IMR-90 (cell line): ENCODE measurements at regions of chr3 and their contacts with region 1.

Region 1: GRCh38 chr3:58299839-58300516 is 6.1 kb upstream of the RPP14 start:
- DNase-seq: peak; percentile 73
- ATAC-seq: peak; percentile 72
- H3K4me3 ChIP-seq: no peak overlapping the region
- H3K27ac ChIP-seq: no peak overlapping the region
- H3K4me1 ChIP-seq: no peaks in the 10 kb centered on the region
- H3K27me3 ChIP-seq: peaks cover 20% of the 10 kb centered on the region
- CTCF ChIP-seq: peak; percentile 85
- POLR2A ChIP-seq: peak; percentile 43; the same call in 1 of the 2 replicates
- RAD21 ChIP-seq: peak; percentile 82

Region 2: DNA sequence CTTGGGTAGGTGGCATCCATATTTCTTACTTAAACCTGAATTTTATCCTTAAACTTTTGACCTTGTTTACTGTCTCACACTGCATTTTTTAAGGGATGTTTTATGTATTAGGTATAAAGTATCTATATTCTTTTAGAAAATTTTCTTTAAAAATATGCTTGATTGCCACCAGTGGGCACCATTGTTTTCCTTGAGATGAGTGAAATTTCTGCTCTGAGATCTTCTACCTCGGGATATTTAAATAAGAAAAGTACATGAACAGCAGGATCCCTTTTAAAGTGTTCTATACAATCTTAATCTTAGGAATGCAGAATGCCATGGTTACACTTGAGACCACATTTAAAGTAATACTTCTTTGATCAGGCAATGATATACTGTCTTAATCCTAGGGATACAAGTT is 435.1 kb before region 1 on chr3:
- CTCF ChIA-PET with region 1: no interaction called
- POLR2A ChIA-PET with region 1: no interaction called
- dilution Hi-C with region 1: no loop called
- in situ Hi-C with region 1: no loop called
- intact Hi-C with region 1: loop called (anchors 5 kb)
- DNase-seq: peak; percentile 45
- ATAC-seq: peak; percentile 63
- H3K4me3 ChIP-seq: no peak overlapping the region
- H3K27ac ChIP-seq: no peak overlapping the region
- H3K4me1 ChIP-seq: no peaks in the 10 kb centered on the region
- H3K27me3 ChIP-seq: no peaks in the 10 kb centered on the region
- CTCF ChIP-seq: peak; percentile 61
- POLR2A ChIP-seq: no peak
- RAD21 ChIP-seq: peak; percentile 66

Region 3: GRCh38 chr3:57961828-57962447 is 338.0 kb before region 1 on chr3:
- CTCF ChIA-PET with region 1: no interaction called
- POLR2A ChIA-PET with region 1: no interaction called
- dilution Hi-C with region 1: no loop called
- in situ Hi-C with region 1: no loop called
- intact Hi-C with region 1: loop called (anchors 5 kb)
- DNase-seq: peak; percentile 61
- ATAC-seq: peak; percentile 64
- H3K4me3 ChIP-seq: no peak overlapping the region
- H3K27ac ChIP-seq: no peak overlapping the region
- H3K4me1 ChIP-seq: peaks cover 2% of the 10 kb centered on the region; the same call in 1 of the 2 replicates
- H3K27me3 ChIP-seq: no peaks in the 10 kb centered on the region
- CTCF ChIP-seq: peak; percentile 66
- POLR2A ChIP-seq: no peak
- RAD21 ChIP-seq: peak; percentile 74

Region 4: DNA sequence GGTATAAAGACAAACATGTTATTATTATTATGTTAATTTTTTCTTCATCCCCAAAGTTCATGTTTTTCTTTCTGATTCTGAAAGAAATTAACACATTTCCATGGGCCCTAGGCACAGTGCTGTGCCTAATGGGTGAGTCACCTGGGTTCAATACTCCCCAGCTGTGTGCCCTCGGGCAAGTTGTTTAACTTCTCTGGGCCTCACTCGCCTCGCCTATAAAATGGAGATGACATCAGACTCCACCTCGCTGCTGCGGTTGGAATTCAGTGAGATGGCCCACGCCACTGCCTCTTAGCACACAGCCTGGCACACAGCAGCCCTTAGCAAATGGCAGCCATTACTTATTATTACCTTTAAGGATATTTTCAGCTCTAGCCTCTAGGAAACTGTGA is 111.8 kb before region 1 on chr3:
- CTCF ChIA-PET with region 1: interaction called, 19 read pairs
- POLR2A ChIA-PET with region 1: no interaction called
- dilution Hi-C with region 1: no loop called
- in situ Hi-C with region 1: loop called (anchors 5 kb)
- intact Hi-C with region 1: loop called (anchors 1 kb)
- DNase-seq: no peak
- ATAC-seq: no peak; the same call in 1 of the 2 replicates
- H3K4me3 ChIP-seq: no peak overlapping the region
- H3K27ac ChIP-seq: no peak overlapping the region
- H3K4me1 ChIP-seq: no peaks in the 10 kb centered on the region
- H3K27me3 ChIP-seq: peaks cover 6% of the 10 kb centered on the region
- CTCF ChIP-seq: no peak
- POLR2A ChIP-seq: no peak
- RAD21 ChIP-seq: no peak

Region 5: GRCh38 chr3:58237238-58237940 is 62.6 kb before region 1 on chr3 and contains the start of gene ABHD6:
- CTCF ChIA-PET with region 1: interaction called, 3 read pairs
- POLR2A ChIA-PET with region 1: no interaction called
- dilution Hi-C with region 1: no loop called
- in situ Hi-C with region 1: no loop called
- intact Hi-C with region 1: loop called (anchors 2 kb)
- DNase-seq: peak; percentile 58
- ATAC-seq: peak; percentile 90
- H3K4me3 ChIP-seq: peak within 1 kb of the TSS; percentile 99
- H3K27ac ChIP-seq: peak within 1 kb of the TSS; percentile 96
- H3K4me1 ChIP-seq: peaks cover 5% of the 10 kb centered on the region; the same call in 1 of the 2 replicates
- H3K27me3 ChIP-seq: peaks cover 4% of the 10 kb centered on the region; the same call in 1 of the 2 replicates
- CTCF ChIP-seq: peak; percentile 51
- POLR2A ChIP-seq: no peak
- RAD21 ChIP-seq: peak; percentile 55
- total RNA-seq, gene ABHD6: 4.7 and 5.0 TPM in 2 replicates

Region 6: DNA sequence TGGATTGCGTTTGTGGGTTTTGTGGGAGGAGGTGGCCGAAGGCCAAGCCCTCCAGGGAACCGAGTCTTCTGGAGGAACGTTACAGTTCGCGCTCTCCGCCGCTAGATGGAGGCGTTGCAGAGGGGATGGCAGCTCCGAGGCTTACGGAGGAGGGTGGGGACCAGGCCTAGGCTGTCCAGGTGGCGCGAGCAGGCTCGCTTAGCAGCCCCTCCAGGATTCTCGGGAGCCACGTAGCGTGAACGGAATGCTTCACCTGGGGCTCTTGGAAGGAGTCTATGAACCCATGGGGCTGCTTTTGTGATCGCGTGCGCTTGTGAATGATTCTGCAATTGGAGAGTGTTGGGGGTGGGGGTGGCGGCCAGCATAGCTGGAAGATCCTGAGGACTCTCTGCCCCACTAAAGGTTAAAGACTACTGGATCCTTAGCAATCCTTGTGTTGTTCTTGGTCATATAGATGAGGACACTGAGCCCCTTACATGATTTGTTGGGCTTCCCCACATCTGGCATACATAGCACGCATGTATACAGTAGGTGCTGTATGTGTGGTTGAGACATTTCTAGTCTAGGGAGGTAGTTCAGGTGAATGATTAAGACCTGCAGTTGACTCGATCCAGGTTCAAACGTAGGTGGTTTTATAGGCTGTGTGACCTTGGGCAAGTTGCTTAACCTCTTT is 340.9 kb after region 1 on chr3:
- CTCF ChIA-PET with region 1: no interaction called
- POLR2A ChIA-PET with region 1: no interaction called
- dilution Hi-C with region 1: no loop called
- in situ Hi-C with region 1: no loop called
- intact Hi-C with region 1: no loop called
- DNase-seq: peak; percentile 74
- ATAC-seq: peak; percentile 97
- H3K4me3 ChIP-seq: no peak overlapping the region
- H3K27ac ChIP-seq: no peak overlapping the region
- H3K4me1 ChIP-seq: peaks cover 7% of the 10 kb centered on the region; the same call in 1 of the 2 replicates
- H3K27me3 ChIP-seq: no peaks in the 10 kb centered on the region
- CTCF ChIP-seq: peak; percentile 92
- POLR2A ChIP-seq: peak; percentile 27; the same call in 1 of the 2 replicates
- RAD21 ChIP-seq: peak; percentile 98